ENCODE measurements at regions of chr9 and their contacts with region 1.

Region 1: DNA sequence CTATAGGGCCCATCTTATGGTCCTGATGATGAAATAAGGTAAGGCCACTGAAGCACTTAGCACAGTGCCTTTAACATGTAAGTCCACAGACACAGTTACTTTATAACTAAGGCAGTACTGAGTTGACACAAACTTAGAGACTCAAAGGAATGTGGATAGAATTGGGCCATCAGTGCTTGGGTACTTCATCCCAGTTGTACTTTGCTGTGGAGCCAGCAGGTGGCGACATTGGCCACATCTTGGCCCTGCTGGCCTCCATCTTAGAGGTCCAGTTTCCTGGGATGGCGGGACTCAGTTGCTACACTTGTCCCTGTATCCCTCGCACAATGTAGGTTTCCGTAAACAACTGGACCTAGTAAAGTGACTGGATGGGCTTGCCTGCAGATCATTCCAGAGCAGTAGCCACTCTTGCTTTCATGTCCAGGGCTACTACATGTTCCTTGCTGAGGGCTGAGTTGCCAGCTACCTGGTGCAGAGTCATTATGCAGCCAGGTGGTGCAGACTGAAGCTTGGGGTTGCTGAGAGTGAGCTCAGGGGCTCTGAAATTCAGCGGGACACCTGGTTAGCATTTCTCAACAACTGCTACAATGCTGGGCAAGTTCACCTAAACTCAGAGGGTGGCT is 10.6 kb downstream of the MTAP start:
- DNase-seq: peak; percentile 64
- H3K4me3 Mint-ChIP-seq: no peak overlapping the region
- H3K27ac Mint-ChIP-seq: no peak overlapping the region
- H3K4me1 Mint-ChIP-seq: peaks cover 17% of the 10 kb centered on the region
- H3K27me3 Mint-ChIP-seq: no peaks in the 10 kb centered on the region

Region 2: DNA sequence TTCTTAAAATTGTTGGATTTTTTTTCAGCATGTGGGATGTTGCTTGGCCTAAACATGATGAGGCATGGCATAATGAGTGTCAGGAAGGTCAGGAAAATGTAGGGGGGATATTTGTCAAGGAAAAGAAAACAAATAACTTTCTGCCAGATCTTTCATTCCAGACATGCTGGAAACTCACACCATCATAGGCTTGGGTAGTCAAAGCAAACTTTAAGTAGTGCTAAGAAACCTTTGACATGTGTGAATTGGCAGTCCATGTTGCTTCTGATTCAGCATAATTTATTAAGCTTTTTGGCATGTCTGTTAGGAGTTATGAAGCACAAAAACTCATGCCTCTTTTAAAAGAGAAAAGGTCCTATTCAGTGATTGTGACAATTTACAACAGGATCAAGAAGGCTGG is 71.9 kb before region 1 on chr9:
- CTCF ChIA-PET with region 1: no interaction called
- POLR2A ChIA-PET with region 1: no interaction called
- DNase-seq: no peak
- H3K4me3 Mint-ChIP-seq: no peak overlapping the region
- H3K27ac Mint-ChIP-seq: no peak overlapping the region
- H3K4me1 Mint-ChIP-seq: no peaks in the 10 kb centered on the region
- H3K27me3 Mint-ChIP-seq: peaks cover 55% of the 10 kb centered on the region

Region 3: GRCh38 chr9:21840647-21841046 is 27.6 kb after region 1 on chr9:
- CTCF ChIA-PET with region 1: no interaction called
- POLR2A ChIA-PET with region 1: no interaction called
- DNase-seq: no peak
- H3K4me3 Mint-ChIP-seq: no peak overlapping the region
- H3K27ac Mint-ChIP-seq: no peak overlapping the region
- H3K4me1 Mint-ChIP-seq: no peaks in the 10 kb centered on the region
- H3K27me3 Mint-ChIP-seq: no peaks in the 10 kb centered on the region

Region 4: DNA sequence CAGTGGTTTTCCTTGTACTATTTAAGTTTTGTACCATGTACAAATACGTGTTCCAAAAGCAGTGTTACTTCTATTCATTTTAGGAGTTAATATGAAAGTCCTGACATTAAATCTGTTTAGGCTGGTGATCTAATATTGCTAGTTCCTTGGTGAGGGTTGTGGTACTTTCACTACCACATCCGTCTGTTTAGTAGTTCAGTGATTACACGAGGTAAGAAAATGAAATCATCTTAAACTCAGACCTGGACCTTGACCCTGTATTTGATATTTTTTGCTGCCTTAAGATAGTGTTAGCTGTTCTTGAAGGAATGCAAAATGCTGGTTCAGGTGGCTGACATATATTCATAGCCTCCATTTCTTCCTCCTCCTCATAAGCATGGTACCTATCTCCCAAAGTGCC is 39.7 kb after region 1 on chr9:
- CTCF ChIA-PET with region 1: no interaction called
- POLR2A ChIA-PET with region 1: no interaction called
- DNase-seq: no peak
- H3K4me3 Mint-ChIP-seq: no peak overlapping the region
- H3K27ac Mint-ChIP-seq: no peak overlapping the region
- H3K4me1 Mint-ChIP-seq: peaks cover 18% of the 10 kb centered on the region
- H3K27me3 Mint-ChIP-seq: no peaks in the 10 kb centered on the region

Region 5: DNA sequence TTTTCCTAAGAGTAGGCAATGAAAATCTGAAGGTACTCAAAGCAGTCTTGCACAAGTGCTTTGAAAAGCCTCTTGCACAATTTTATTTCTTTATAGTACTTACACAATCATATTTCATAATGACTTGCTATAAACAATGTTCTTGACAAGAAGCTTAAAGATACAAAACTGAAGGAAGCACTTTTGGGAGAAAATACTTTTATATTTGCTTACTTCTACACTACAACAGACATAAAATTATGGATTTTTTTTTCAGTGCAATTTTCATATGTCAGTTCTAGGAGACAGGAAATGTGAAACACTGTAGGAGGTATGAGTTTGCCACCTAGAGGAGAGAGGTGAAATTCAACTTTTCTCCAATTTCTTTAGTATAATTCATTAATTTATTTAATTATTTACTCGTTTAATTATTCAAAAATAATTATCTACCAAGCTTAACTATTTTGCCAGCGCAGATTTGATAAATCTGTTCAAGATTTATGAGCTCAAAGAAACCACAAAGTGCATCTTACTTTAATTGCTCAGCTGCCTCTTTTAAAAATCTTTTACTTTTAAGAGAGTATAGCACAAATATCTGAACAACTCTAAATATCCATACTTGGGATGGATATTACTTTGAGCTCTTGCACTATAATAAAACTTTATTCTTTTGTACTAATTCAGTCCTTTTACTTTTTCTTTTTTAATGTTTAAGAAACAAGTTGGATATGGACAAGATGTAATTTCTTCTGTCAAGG is 225.1 kb after region 1 on chr9:
- CTCF ChIA-PET with region 1: interaction called, 11 read pairs
- POLR2A ChIA-PET with region 1: no interaction called
- DNase-seq: no peak
- H3K4me3 Mint-ChIP-seq: no peak overlapping the region
- H3K27ac Mint-ChIP-seq: no peak overlapping the region
- H3K4me1 Mint-ChIP-seq: peaks cover 33% of the 10 kb centered on the region
- H3K27me3 Mint-ChIP-seq: peaks cover 34% of the 10 kb centered on the region